AG04450 (cell line): ENCODE measurements at regions of chr10 and their contacts with region 1.

Region 1: GRCh38 chr10:13160934-13161856 is at the start of gene MCM10:
- DNase-seq: peak; percentile 99
- H3K4me3 ChIP-seq: peak within 1 kb of the TSS; percentile 67
- H3K27ac ChIP-seq: no peak within 1 kb of the TSS
- H3K27me3 ChIP-seq: no peaks in the 10 kb centered on the region
- CTCF ChIP-seq: peak; percentile 82
- polyA plus RNA-seq, gene MCM10: 2.0 and 2.6 TPM in 2 replicates

Region 2: DNA sequence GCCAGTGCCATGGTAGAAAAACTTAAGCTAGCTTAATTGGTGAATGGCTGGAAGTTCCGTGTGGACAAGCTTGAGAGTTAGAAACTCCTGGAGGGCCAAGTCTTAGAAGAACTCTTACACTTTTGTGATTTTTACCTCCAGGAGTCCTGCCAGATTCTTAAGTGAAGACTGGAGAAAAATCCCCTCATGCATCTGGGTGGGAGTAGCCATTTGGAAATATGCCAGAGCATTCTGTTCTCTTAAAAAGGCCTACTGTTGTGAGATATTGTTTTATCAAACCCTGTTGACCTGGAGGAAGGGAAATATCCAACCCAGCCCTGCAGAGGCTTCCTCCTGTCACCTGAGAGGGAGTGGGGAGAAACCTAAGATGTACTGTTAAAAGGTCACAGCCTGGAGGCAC is 17.4 kb before region 1 on chr10:
- CTCF ChIA-PET with region 1: interaction called, 12 read pairs
- POLR2A ChIA-PET with region 1: interaction called, 3 read pairs
- DNase-seq: no peak
- H3K4me3 ChIP-seq: no peak overlapping the region
- H3K27ac ChIP-seq: no peak overlapping the region
- H3K27me3 ChIP-seq: no peaks in the 10 kb centered on the region
- CTCF ChIP-seq: no peak

Region 3: DNA sequence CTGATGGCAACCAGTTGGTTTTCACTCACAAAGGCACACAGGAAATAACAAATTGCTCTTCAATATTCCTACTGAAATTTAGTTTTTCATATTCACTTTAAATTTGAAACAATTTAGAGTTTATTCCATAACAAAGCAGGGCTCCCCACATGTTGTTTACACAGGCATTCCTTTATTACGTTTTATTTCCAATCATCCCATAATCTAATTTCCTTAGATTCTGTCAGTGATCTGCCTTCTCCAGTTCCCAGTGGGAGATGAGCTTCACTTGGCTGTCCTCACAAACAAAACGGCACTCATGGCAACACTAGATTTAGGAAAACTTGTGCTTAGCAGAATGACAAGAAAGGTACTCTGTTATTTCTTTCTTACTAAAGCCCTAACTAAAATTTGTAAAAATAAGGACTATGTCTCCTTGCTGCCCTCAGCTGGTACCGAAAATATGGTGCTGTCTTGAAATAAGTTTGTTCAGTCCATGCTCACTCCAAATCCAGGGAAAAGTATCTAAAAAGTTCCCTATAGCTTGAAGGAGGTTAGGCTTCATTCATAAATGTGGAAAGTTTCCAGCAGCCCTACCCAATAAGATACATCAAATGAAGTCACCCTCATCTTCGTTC is 115.7 kb after region 1 on chr10:
- CTCF ChIA-PET with region 1: interaction called, 12 read pairs
- POLR2A ChIA-PET with region 1: no interaction called
- DNase-seq: no peak
- H3K4me3 ChIP-seq: no peak overlapping the region
- H3K27ac ChIP-seq: no peak overlapping the region
- H3K27me3 ChIP-seq: no peaks in the 10 kb centered on the region
- CTCF ChIP-seq: peak; percentile 31

Region 4: GRCh38 chr10:13299437-13300287 is 138.5 kb after region 1 on chr10 and contains the start of gene PHYH:
- CTCF ChIA-PET with region 1: interaction called, 96 read pairs
- POLR2A ChIA-PET with region 1: interaction called, 4 read pairs
- DNase-seq: peak; percentile 33
- H3K4me3 ChIP-seq: peak within 1 kb of the TSS; percentile 68
- H3K27ac ChIP-seq: peak within 1 kb of the TSS; percentile 68
- H3K27me3 ChIP-seq: no peaks in the 10 kb centered on the region
- CTCF ChIP-seq: no peak
- polyA plus RNA-seq, gene PHYH: 15.3 and 16.7 TPM in 2 replicates